Heart right ventricle (tissue), 16 donors: ENCODE measurements at regions of chr3 and their contacts with region 1.

Region 1: GRCh38 chr3:107543666-107544065 is 20.9 kb downstream of the BBX start:
- DNase-seq: no peak
- ATAC-seq: no peak
- H3K4me3 ChIP-seq: no peak overlapping the region
- H3K27ac ChIP-seq: no peak overlapping the region
- H3K4me1 ChIP-seq: no peaks in the 10 kb centered on the region
- H3K27me3 ChIP-seq: no peaks in the 10 kb centered on the region
- CTCF ChIP-seq: peak in 6 of 9 donors; percentile 28 to 50 (median 30)

Region 2: DNA sequence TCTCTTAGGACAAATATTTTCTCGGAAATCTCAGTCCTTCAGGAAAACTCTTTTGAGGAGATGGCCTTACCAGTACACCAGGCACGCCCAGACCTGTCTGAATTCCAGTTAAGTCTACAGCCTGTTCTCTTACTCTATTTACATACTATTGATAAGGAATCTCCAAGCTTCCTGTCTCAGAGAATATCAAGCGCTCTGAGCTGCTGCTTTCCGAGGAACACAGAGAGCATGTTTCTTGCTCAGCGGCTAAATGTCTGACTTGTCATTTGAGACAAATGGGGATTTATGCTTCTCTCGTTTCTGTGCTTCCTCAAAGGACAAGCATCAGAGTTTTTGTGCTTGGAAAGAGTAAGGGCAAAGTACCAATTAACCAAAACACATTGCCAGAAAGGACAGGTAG is 278.8 kb before region 1 on chr3:
- intact Hi-C with region 1: loop called in 4 of 10 experiments (anchors 5 to 10 kb)
- DNase-seq: no peak
- ATAC-seq: peak in 3 of 8 donors; percentile 18 to 52 (median 35)
- H3K4me3 ChIP-seq: no peak overlapping the region
- H3K27ac ChIP-seq: peak overlapping the region in 5 of 10 donors; percentile 2 to 37 (median 33)
- H3K4me1 ChIP-seq: peaks cover 0 to 27% (median 6%) of the 10 kb centered on the region in 9 donors
- H3K27me3 ChIP-seq: no peaks in the 10 kb centered on the region
- CTCF ChIP-seq: no peak

Region 3: DNA sequence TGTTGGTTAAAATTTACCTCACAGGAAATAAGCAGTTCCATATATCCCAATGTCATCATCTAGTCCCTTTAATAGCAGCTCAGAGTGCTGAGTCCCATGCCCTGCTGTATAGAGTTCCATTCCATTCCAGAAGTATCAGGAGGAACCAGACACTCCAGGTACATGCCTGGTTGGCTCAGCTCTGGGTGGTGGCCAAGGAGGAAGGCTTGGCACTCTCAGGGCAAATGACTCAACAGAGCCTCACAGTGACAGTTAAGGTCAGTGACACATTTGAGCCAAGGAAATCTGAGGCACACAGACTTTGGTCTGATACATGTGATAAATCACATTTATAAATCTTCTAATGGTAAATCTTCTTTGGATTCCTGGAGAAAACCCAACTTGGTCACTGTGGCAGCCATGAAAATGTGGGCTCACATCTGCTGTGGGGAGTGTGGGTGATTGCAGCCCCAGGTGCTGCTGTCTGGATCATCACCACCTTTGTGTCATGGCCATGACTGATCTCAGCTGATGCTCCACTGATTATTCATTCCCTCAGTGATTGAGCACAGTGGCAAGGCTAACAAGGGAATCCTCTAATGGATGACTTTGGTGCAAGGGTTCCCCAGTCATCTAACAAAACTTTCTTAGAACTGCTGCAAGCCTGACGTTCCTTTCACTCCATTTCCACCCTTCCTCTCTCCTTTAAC is 762.0 kb after region 1 on chr3:
- intact Hi-C with region 1: no loop called
- DNase-seq: peak in 1 of 2 donors; percentile 15
- ATAC-seq: peak in 2 of 8 donors; percentile 31 to 72
- H3K4me3 ChIP-seq: no peak overlapping the region
- H3K27ac ChIP-seq: no peak overlapping the region
- H3K4me1 ChIP-seq: no peaks in the 10 kb centered on the region
- H3K27me3 ChIP-seq: no peaks in the 10 kb centered on the region
- CTCF ChIP-seq: no peak